OCI-LY7 (cell line): ENCODE measurements at regions of chr3 and their contacts with region 1.

Region 1: GRCh38 chr3:16928386-16929132 is 43.8 kb downstream of the PLCL2 start:
- DNase-seq: no peak
- H3K4me3 ChIP-seq: no peak overlapping the region
- H3K27ac ChIP-seq: no peak overlapping the region
- H3K4me1 ChIP-seq: peaks cover 19% of the 10 kb centered on the region
- CTCF ChIP-seq: no peak

Region 2: GRCh38 chr3:16893618-16894200 is 34.9 kb before region 1 on chr3:
- CTCF ChIA-PET with region 1: no interaction called
- POLR2A ChIA-PET with region 1: no interaction called
- intact Hi-C with region 1: no loop called
- DNase-seq: no peak
- H3K4me3 ChIP-seq: no peak overlapping the region
- H3K27ac ChIP-seq: no peak overlapping the region
- H3K4me1 ChIP-seq: peaks cover 94% of the 10 kb centered on the region
- CTCF ChIP-seq: no peak

Region 3: GRCh38 chr3:16906682-16907081 is 21.9 kb before region 1 on chr3:
- CTCF ChIA-PET with region 1: no interaction called
- POLR2A ChIA-PET with region 1: interaction called, 10 read pairs
- intact Hi-C with region 1: no loop called
- DNase-seq: no peak
- H3K4me3 ChIP-seq: peak overlapping the region; percentile 3
- H3K27ac ChIP-seq: peak overlapping the region; percentile 10
- H3K4me1 ChIP-seq: peaks cover 98% of the 10 kb centered on the region
- CTCF ChIP-seq: no peak

Region 4: GRCh38 chr3:16942955-16943354 is 14.4 kb after region 1 on chr3:
- CTCF ChIA-PET with region 1: no interaction called
- POLR2A ChIA-PET with region 1: interaction called, 11 read pairs
- intact Hi-C with region 1: no loop called
- DNase-seq: no peak
- H3K4me3 ChIP-seq: no peak overlapping the region
- H3K27ac ChIP-seq: no peak overlapping the region
- H3K4me1 ChIP-seq: no peaks in the 10 kb centered on the region
- CTCF ChIP-seq: no peak